Naive thymus-derived CD4-positive, alpha-beta T cell (primary cell): ENCODE measurements at regions of chr6 and their contacts with region 1.

Region 1: GRCh38 chr6:113306552-113307145 is 550.5 kb upstream of the MARCKS start:
- DNase-seq: peak in 6 of 9 donors; percentile 5 to 33 (median 16)
- ATAC-seq: peak; percentile 77
- H3K4me3 ChIP-seq: no peak overlapping the region
- H3K4me3 Mint-ChIP-seq: no peak overlapping the region
- H3K27ac ChIP-seq: no peak overlapping the region
- H3K27ac Mint-ChIP-seq: no peak overlapping the region
- H3K4me1 ChIP-seq: no peaks in the 10 kb centered on the region
- H3K4me1 Mint-ChIP-seq: no peaks in the 10 kb centered on the region
- H3K27me3 ChIP-seq: no peaks in the 10 kb centered on the region
- H3K27me3 Mint-ChIP-seq: peaks cover 0 to 9% (median 0%) of the 10 kb centered on the region in 5 donors

Region 2: DNA sequence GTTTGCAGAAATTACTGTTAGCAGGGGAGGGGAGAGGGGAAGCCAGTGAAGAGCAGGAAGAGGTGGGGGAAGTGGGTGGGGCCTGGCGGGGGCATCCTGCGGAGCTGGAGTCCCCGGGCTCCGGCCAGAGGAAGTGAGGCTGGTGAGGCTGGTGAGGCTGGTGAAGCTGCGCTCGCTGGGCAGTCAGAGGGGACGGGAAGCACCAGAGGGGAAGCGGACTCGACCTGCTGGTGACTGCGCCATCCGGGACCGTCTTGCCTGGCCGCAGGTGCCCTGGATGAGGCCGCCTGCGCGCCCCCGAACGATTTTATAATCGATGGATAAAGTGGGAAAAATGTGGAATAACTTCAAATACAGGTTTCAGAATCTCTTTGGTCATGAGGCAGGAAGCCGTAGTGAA is 84.8 kb before region 1 on chr6:
- CTCF ChIA-PET with region 1: no interaction called
- POLR2A ChIA-PET with region 1: no interaction called
- intact Hi-C with region 1: no loop called
- DNase-seq: no peak
- ATAC-seq: no peak
- H3K4me3 ChIP-seq: no peak overlapping the region
- H3K4me3 Mint-ChIP-seq: peak overlapping the region in 1 of 10 donors; percentile 2
- H3K27ac ChIP-seq: no peak overlapping the region
- H3K27ac Mint-ChIP-seq: no peak overlapping the region
- H3K4me1 ChIP-seq: no peaks in the 10 kb centered on the region
- H3K4me1 Mint-ChIP-seq: no peaks in the 10 kb centered on the region
- H3K27me3 ChIP-seq: no peaks in the 10 kb centered on the region
- H3K27me3 Mint-ChIP-seq: no peaks in the 10 kb centered on the region

Region 3: GRCh38 chr6:113586413-113587077 is 279.9 kb after region 1 on chr6:
- CTCF ChIA-PET with region 1: no interaction called
- POLR2A ChIA-PET with region 1: no interaction called
- intact Hi-C with region 1: no loop called
- DNase-seq: no peak
- ATAC-seq: no peak
- H3K4me3 ChIP-seq: no peak overlapping the region
- H3K4me3 Mint-ChIP-seq: no peak overlapping the region
- H3K27ac ChIP-seq: no peak overlapping the region
- H3K27ac Mint-ChIP-seq: no peak overlapping the region
- H3K4me1 ChIP-seq: no peaks in the 10 kb centered on the region
- H3K4me1 Mint-ChIP-seq: no peaks in the 10 kb centered on the region
- H3K27me3 ChIP-seq: no peaks in the 10 kb centered on the region
- H3K27me3 Mint-ChIP-seq: peaks cover 0 to 8% (median 0%) of the 10 kb centered on the region in 5 donors

Region 4: DNA sequence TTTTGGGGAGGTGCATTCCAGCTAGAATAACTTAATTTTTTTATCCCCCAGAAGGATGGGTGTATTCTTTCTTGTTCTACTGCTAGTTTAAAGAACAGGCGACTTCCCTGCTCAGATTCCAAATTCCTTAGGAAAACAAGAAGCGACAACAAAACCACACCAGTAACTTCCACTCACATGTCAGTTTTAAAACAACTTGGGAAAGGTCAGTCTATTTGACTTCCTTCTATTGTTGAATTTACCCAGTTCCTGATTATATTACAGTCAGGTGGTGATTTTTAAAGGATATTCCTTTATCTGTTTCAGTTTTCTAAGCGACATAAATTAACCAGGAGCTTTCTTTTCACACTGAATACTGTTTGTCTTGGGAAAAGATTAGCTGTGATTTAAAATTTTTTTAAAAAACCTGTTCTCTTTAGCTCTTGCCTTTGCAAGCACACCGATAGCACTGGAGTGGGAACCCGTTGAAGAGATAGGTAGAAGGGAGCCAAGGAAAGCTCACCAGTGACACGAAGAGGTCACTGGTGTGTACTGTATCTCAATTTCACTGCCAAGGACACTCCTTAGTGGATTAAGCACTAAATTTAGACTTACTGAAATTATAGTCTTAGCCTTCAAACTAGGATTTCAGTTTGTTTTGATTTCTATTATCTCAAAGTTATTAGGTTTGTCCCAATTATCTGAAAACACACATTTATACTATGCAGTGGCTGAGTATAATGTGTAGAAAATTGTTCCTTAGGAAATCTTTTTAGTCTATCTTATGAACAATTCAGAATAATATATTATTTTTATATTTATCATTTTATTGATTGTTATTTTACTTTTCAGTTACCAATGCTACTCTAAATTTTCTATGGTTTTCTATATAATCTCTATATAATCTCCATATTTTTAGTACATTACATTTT is 572.8 kb after region 1 on chr6:
- CTCF ChIA-PET with region 1: interaction called, 3 read pairs
- POLR2A ChIA-PET with region 1: no interaction called
- intact Hi-C with region 1: loop called in 1 of 2 experiments (anchors 1 kb)
- DNase-seq: peak in 2 of 9 donors; percentile 8 to 33
- ATAC-seq: peak; percentile 74
- H3K4me3 ChIP-seq: no peak overlapping the region
- H3K4me3 Mint-ChIP-seq: no peak overlapping the region
- H3K27ac ChIP-seq: no peak overlapping the region
- H3K27ac Mint-ChIP-seq: no peak overlapping the region
- H3K4me1 ChIP-seq: no peaks in the 10 kb centered on the region
- H3K4me1 Mint-ChIP-seq: no peaks in the 10 kb centered on the region
- H3K27me3 ChIP-seq: peaks cover 0 to 3% of the 10 kb centered on the region in 2 donors
- H3K27me3 Mint-ChIP-seq: peaks cover 22 to 61% (median 36%) of the 10 kb centered on the region in 5 donors

Region 5: DNA sequence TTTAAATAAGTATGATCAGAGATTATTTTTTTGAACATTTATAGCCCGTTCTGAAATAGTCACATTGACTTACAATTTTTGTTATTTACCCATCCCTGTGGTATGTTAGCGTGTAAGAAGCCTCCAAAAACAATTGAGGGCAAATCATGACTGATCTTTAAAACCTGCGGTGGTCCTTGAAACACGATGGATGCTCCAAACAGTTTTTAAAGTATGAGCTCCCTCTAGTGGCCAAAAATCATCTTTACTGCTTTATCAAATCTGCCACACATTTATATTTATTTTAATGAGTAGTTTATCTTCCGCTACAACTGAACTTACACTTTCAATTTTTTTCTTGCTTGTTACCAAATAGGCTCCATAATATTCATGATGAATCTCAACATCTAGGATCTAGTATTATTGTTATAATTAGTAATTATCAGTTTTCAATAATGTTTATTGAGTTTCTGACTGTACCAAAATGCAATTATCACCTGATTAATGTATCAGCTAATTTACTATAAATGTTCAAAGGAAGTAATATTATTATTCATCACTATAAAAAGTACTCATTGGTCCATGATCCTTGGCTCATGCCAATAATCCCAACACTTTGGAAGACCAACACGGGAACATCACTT is 602.7 kb after region 1 on chr6:
- CTCF ChIA-PET with region 1: no interaction called
- POLR2A ChIA-PET with region 1: no interaction called
- intact Hi-C with region 1: loop called in 1 of 2 experiments (anchors 2 kb)
- DNase-seq: peak in 6 of 9 donors; percentile 19 to 42 (median 31)
- ATAC-seq: peak; percentile 51
- H3K4me3 ChIP-seq: no peak overlapping the region
- H3K4me3 Mint-ChIP-seq: no peak overlapping the region
- H3K27ac ChIP-seq: no peak overlapping the region
- H3K27ac Mint-ChIP-seq: no peak overlapping the region
- H3K4me1 ChIP-seq: no peaks in the 10 kb centered on the region
- H3K4me1 Mint-ChIP-seq: peaks cover 0 to 4% (median 2%) of the 10 kb centered on the region in 7 donors
- H3K27me3 ChIP-seq: no peaks in the 10 kb centered on the region
- H3K27me3 Mint-ChIP-seq: peaks cover 0 to 20% (median 0%) of the 10 kb centered on the region in 5 donors